Mammary epithelial cell (primary cell): ENCODE measurements at regions of chr20 and their contacts with region 1.

Region 1: GRCh38 chr20:11676630-11677284 is 240.9 kb upstream of the BTBD3 start:
- DNase-seq: peak; percentile 27
- H3K4me3 ChIP-seq: no peak overlapping the region
- H3K27ac ChIP-seq: no peak overlapping the region
- H3K4me1 ChIP-seq: no peaks in the 10 kb centered on the region
- H3K27me3 ChIP-seq: no peaks in the 10 kb centered on the region
- CTCF ChIP-seq: peak; percentile 87 to 94

Region 2: GRCh38 chr20:11890331-11891080 is 213.7 kb after region 1 on chr20:
- CTCF ChIA-PET with region 1: no interaction called
- dilution Hi-C with region 1: no loop called
- in situ Hi-C with region 1: no loop called
- intact Hi-C with region 1: loop called (anchors 1 kb)
- DNase-seq: peak; percentile 84
- H3K4me3 ChIP-seq: peak overlapping the region; percentile 68 to 96 (median 75)
- H3K27ac ChIP-seq: peak overlapping the region; percentile 82
- H3K4me1 ChIP-seq: peaks cover 19% of the 10 kb centered on the region
- H3K27me3 ChIP-seq: no peaks in the 10 kb centered on the region
- CTCF ChIP-seq: no peak

Region 3: GRCh38 chr20:11965602-11966001 is 288.8 kb after region 1 on chr20:
- CTCF ChIA-PET with region 1: no interaction called
- dilution Hi-C with region 1: no loop called
- in situ Hi-C with region 1: no loop called
- intact Hi-C with region 1: loop called (anchors 10 kb)
- DNase-seq: no peak
- H3K4me3 ChIP-seq: no peak overlapping the region
- H3K27ac ChIP-seq: no peak overlapping the region
- H3K4me1 ChIP-seq: no peaks in the 10 kb centered on the region
- H3K27me3 ChIP-seq: no peaks in the 10 kb centered on the region
- CTCF ChIP-seq: peak in 1 of 2 donors; percentile 19

Region 4: DNA sequence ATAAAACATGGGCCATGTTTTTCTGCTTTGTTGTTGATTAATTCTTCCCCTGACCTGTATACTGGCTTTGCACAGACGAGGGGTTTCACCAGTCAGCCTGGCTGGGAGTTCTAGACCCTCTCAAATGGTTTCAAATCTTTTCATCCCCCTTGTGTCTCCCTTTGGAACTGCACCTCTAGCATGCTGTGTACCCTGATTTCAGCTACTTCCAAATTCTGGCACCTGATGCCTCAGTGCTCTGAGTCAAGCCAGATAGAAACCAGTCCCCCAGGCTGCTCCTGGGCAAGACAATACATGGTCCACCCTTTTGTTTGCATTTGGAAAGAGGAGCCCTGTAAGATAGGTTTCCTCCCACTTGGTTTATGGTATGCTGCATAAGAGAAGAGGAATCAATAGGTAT is 531.1 kb after region 1 on chr20:
- CTCF ChIA-PET with region 1: no interaction called
- dilution Hi-C with region 1: no loop called
- in situ Hi-C with region 1: no loop called
- intact Hi-C with region 1: loop called (anchors 1 kb)
- DNase-seq: peak; percentile 47
- H3K4me3 ChIP-seq: no peak overlapping the region
- H3K27ac ChIP-seq: no peak overlapping the region
- H3K4me1 ChIP-seq: no peaks in the 10 kb centered on the region
- H3K27me3 ChIP-seq: peaks cover 1% of the 10 kb centered on the region
- CTCF ChIP-seq: peak; percentile 75 to 84